Pancreas (tissue), 10 donors: ENCODE measurements at regions of chr1 and their contacts with region 1.

Region 1: DNA sequence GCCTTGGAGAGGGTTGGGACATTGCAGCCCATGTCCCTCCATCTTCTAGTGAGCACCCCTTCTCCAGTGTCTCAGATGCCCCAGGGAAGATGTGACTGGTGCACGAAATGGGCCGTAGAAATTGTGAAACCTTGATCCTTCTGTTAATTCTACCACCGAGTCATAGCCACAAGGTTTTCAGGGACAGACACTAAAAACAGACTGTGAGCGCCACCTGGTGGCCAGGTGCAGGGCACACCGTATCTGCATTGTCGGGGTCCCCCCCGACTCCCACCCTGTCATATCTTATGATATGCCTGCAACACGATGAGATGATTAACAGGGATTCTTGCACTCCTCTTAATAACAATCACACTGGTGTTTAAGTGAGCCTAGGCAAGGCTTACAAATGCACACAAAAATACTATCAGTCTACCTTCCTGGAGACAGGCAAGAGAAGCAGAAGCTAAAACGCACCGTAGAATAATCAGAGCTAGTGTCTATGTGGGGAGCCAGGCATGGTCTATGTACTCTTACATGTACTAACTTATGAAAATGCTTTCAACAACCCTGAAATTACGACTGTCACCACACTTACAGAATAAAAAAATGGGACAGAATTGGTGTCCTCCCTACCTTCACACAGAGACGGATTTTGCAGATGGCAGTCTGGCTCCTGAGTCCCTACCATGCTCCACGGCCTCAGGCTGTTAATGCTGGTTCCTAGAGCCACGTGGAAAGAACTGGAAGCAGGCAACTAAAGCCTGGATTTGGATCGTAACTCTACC is 57.9 kb downstream of the FHAD1 start:
- DNase-seq: peak in 5 of 6 donors; percentile 57 to 91 (median 67)
- ATAC-seq: peak; percentile 67 to 84 (median 80)
- H3K4me3 ChIP-seq: no peak overlapping the region
- H3K27ac ChIP-seq: no peak overlapping the region
- H3K4me1 ChIP-seq: peaks cover 0 to 4% (median 2%) of the 10 kb centered on the region in 3 donors
- H3K27me3 ChIP-seq: no peaks in the 10 kb centered on the region
- CTCF ChIP-seq: peak; percentile 79 to 96 (median 87)

Region 2: DNA sequence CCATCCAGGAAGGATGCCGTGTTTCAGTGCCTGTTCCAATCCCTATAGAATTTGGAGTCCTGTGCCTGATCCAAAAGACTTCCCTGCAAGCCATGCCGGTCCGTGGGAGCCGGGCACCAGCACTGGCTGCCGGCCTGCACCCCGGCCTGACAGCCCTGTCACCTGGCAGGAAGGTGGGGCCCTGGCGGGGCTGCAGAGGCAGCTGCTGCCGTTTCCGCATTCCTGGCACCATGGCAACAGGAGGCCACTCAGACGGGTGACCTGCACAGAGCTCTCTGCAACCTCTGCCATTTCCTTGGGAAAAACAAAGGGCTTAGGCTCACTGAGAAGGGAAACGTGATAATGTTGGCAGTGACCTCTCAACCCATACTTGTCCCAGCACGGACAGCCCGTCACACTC is 214.5 kb before region 1 on chr1:
- intact Hi-C with region 1: no loop called
- DNase-seq: peak; percentile 89 to 96 (median 92)
- ATAC-seq: peak; percentile 98 to 99 (median 98)
- H3K4me3 ChIP-seq: peak overlapping the region in 1 of 4 donors; percentile 3
- H3K27ac ChIP-seq: peak overlapping the region; percentile 52 to 67 (median 66)
- H3K4me1 ChIP-seq: peaks cover 7 to 12% (median 9%) of the 10 kb centered on the region in 3 donors
- H3K27me3 ChIP-seq: no peaks in the 10 kb centered on the region
- CTCF ChIP-seq: no peak

Region 3: GRCh38 chr1:15128520-15129313 is 176.2 kb before region 1 on chr1:
- intact Hi-C with region 1: loop called in 2 of 3 experiments (anchors 10 kb)
- DNase-seq: peak; percentile 62 to 89 (median 81)
- ATAC-seq: peak; percentile 83 to 95 (median 91)
- H3K4me3 ChIP-seq: no peak overlapping the region
- H3K27ac ChIP-seq: peak overlapping the region in 1 of 4 donors; percentile 39
- H3K4me1 ChIP-seq: peaks cover 5 to 10% (median 9%) of the 10 kb centered on the region in 3 donors
- H3K27me3 ChIP-seq: no peaks in the 10 kb centered on the region
- CTCF ChIP-seq: peak; percentile 81 to 93 (median 84)

Region 4: DNA sequence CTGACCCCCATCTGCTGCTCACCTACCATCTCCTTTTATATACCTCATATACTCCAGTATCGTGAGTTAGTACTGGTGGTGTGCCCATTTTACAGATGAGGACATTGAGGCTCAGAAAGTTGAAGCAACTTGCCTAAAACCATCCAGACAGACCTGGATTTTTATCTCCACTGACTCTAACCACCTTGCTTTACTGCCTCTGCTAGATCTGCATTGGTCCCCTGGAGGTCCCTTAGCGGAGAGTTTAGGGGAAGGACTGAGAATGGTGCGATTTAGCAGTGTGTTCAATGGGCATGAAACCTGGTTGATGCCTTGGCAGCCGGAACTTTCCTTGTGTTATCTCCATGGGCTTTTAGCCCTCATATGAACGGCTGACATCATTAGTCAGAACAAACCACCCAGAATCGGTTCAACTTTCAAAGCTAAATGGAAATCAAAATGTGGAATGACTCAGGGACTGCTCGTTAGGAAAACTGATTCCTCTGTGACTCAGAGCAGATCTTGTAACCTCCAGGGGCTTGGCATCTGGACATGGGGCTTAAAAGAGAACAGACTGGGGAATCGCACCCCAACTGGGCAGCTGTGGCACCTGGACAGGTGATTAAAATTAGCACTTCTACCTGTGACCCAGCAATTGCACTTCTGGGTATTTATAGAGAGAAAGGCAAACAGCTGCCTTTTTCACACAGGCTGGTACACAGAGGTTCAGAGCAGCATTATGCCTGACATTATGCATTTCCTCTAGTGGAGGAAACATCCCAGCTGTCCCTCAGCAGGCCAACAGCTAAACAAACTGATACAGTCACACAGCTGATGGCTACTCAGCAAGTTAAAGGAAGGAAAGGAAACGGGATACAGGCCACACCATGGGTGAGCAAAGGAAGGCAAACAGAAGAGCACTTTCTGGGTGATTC is 126.1 kb before region 1 on chr1:
- intact Hi-C with region 1: no loop called
- DNase-seq: peak in 5 of 6 donors; percentile 80 to 94 (median 86)
- ATAC-seq: peak; percentile 69 to 82 (median 79)
- H3K4me3 ChIP-seq: no peak overlapping the region
- H3K27ac ChIP-seq: peak overlapping the region; percentile 74 to 83 (median 78)
- H3K4me1 ChIP-seq: peaks cover 29 to 81% (median 60%) of the 10 kb centered on the region in 3 donors
- H3K27me3 ChIP-seq: no peaks in the 10 kb centered on the region
- CTCF ChIP-seq: no peak